ENCODE measurements at regions of chr19 and their contacts with region 1.

Region 1: DNA sequence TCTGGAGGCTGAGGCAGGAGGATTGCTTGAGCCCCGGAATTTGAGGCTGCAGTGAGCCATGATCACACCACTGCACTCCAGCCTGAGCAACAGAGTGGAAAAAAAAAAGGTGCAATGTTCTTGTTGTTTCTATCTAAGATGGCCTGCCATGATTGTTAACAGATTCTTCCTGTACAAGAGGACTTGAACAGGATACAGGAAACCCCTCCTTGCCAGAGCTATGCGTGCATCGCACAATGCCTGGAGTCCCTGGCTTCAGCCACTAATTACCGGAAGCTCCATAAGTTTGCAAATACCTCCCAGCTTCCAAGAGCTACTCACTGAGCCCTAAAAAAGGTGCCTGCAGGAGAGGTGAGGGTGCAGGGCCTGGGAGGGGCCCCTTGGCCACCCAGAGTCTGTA is 13.1 kb upstream of the HIF3A start:
- H3K4me3 ChIP-seq: no peak overlapping the region
- H3K27ac ChIP-seq: no peak overlapping the region
- H3K4me1 ChIP-seq: no peaks in the 10 kb centered on the region
- CTCF ChIP-seq: no peak

Region 2: DNA sequence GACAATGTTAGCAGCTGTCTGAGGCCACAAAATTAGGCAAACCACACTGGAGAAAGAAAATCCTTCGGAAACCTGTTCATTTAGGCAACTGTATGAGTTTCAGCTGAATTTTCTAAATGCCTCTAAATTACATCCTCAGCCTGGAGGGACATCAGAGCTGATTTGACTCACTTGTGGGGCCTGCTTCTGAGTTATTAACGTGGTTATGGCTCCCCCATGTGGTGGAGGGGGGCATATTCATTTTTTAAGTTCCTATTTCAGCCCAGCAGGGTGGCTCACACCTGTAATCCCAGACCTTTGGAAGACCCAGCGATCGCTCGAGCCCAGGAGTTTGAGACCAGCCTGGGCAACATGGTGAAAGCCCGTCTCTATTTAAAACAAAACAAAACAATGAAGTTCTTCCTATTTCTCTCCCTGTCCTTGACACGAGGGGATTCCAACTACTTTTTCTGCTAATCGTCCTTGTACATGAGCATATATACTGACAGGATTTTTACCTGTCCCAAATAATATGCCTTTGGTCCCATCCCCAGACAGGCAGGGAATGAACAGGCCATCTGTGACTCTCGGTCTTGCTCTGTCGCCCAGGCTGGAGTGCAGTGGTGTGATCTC is 18.4 kb before region 1 on chr19:
- CTCF ChIA-PET with region 1: interaction called, 20 read pairs
- POLR2A ChIA-PET with region 1: no interaction called
- H3K4me3 ChIP-seq: no peak overlapping the region
- H3K27ac ChIP-seq: no peak overlapping the region
- H3K4me1 ChIP-seq: peaks cover 4% of the 10 kb centered on the region; the same call in 1 of the 2 replicates
- CTCF ChIP-seq: peak; percentile 88

Region 3: GRCh38 chr19:46328079-46328478 is 44.3 kb after region 1 on chr19:
- CTCF ChIA-PET with region 1: interaction called, 10 read pairs
- POLR2A ChIA-PET with region 1: no interaction called
- H3K4me3 ChIP-seq: no peak overlapping the region
- H3K27ac ChIP-seq: no peak overlapping the region
- H3K4me1 ChIP-seq: no peaks in the 10 kb centered on the region
- CTCF ChIP-seq: no peak

Region 4: DNA sequence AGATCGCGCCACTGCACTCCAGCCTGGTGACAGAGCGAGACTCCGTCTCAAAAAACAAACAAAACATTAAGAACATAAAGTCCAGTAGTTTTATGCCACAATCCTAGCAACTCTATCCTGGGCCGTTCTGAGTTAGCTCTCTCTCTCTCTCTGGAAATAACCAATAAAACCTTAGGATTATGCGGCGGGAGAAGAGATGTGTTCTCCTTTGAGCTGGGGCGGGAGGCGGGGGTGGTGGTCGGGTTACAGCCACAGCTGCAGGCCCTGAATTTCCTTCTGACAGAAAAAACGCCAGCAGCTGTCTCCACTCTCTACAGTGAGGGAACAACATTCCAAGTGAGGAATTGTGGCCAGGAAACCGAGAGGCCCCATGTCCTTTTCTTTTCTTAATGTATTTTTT is 196.6 kb after region 1 on chr19:
- CTCF ChIA-PET with region 1: interaction called, 15 read pairs
- POLR2A ChIA-PET with region 1: no interaction called
- H3K4me3 ChIP-seq: no peak overlapping the region
- H3K27ac ChIP-seq: no peak overlapping the region
- H3K4me1 ChIP-seq: peaks cover 6% of the 10 kb centered on the region
- CTCF ChIP-seq: no peak

Region 5: GRCh38 chr19:46513461-46514236 is 229.9 kb after region 1 on chr19:
- CTCF ChIA-PET with region 1: interaction called, 42 read pairs
- POLR2A ChIA-PET with region 1: no interaction called
- H3K4me3 ChIP-seq: no peak overlapping the region
- H3K27ac ChIP-seq: no peak overlapping the region
- H3K4me1 ChIP-seq: no peaks in the 10 kb centered on the region
- CTCF ChIP-seq: peak; percentile 88

Measured in HEK293 (cell line).